Esophagus squamous epithelium (tissue), 5 donors: ENCODE measurements at regions of chr1 and their contacts with region 1.

Region 1: GRCh38 chr1:8314346-8315280 is 3.3 kb upstream of the SLC45A1 start:
- DNase-seq: no peak
- H3K4me3 ChIP-seq: no peak overlapping the region
- H3K27ac ChIP-seq: no peak overlapping the region
- H3K4me1 ChIP-seq: peaks cover 11 to 34% (median 14%) of the 10 kb centered on the region in 3 donors
- H3K27me3 ChIP-seq: peaks cover 0 to 39% (median 0%) of the 10 kb centered on the region in 4 donors
- CTCF ChIP-seq: peak; percentile 49 to 96 (median 95)
- POLR2A ChIP-seq: no peak

Region 2: GRCh38 chr1:7989762-7990428 is 324.7 kb before region 1 on chr1:
- intact Hi-C with region 1: loop called (anchors 10 kb)
- DNase-seq: no peak
- H3K4me3 ChIP-seq: no peak overlapping the region
- H3K27ac ChIP-seq: peak overlapping the region in 1 of 4 donors; percentile 9
- H3K4me1 ChIP-seq: no peaks in the 10 kb centered on the region
- H3K27me3 ChIP-seq: no peaks in the 10 kb centered on the region
- CTCF ChIP-seq: no peak
- POLR2A ChIP-seq: no peak

Region 3: GRCh38 chr1:8031176-8031785 is 283.3 kb before region 1 on chr1:
- intact Hi-C with region 1: loop called (anchors 5 kb)
- DNase-seq: no peak
- H3K4me3 ChIP-seq: no peak overlapping the region
- H3K27ac ChIP-seq: peak overlapping the region in 1 of 4 donors; percentile 12
- H3K4me1 ChIP-seq: peaks cover 4 to 32% (median 7%) of the 10 kb centered on the region in 3 donors
- H3K27me3 ChIP-seq: peaks cover 0 to 7% (median 0%) of the 10 kb centered on the region in 4 donors
- CTCF ChIP-seq: peak in 5 of 6 experiments; percentile 44 to 85 (median 72)
- POLR2A ChIP-seq: no peak

Region 4: DNA sequence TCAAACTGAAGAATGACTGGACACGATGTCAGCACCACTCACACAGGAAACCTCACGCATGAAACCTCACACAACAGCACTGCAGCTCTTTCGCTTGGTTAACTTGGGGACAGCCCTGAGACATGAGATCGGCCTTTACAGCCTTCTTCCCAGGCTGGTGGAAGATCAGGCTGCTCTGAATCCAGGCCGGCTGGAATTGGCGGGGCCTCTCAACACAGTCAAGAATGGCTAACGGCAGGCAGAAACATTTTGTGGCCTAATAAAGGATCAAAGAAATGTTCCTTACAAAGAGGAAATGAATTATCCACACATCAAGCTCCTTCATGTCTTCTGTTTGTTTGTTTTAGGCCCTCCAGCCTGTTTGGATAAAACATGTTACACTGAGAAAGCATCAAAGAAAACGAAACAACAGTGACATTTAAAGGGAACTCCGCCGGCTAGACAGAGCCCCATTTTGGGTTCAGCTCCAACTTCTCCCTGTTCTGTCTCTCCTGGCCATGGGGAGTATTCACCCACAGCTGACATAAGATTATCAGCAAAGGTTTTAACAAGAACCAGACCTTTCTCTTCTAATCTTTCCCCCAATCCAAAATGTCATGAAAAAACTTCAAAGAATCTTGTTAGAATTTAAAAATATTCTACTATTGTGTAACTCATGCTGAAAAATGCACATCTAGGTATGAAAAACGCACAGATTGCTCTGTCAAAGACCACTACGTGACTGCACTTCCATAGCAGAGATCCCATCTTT is 134.5 kb after region 1 on chr1:
- intact Hi-C with region 1: no loop called
- DNase-seq: no peak
- H3K4me3 ChIP-seq: peak overlapping the region in 2 of 4 donors; percentile 18 to 39
- H3K27ac ChIP-seq: peak overlapping the region; percentile 65 to 77 (median 74)
- H3K4me1 ChIP-seq: peaks cover 0 to 33% (median 8%) of the 10 kb centered on the region in 3 donors
- H3K27me3 ChIP-seq: no peaks in the 10 kb centered on the region
- CTCF ChIP-seq: no peak
- POLR2A ChIP-seq: no peak